ENCODE measurements at regions of chr3 and their contacts with region 1.

Region 1: DNA sequence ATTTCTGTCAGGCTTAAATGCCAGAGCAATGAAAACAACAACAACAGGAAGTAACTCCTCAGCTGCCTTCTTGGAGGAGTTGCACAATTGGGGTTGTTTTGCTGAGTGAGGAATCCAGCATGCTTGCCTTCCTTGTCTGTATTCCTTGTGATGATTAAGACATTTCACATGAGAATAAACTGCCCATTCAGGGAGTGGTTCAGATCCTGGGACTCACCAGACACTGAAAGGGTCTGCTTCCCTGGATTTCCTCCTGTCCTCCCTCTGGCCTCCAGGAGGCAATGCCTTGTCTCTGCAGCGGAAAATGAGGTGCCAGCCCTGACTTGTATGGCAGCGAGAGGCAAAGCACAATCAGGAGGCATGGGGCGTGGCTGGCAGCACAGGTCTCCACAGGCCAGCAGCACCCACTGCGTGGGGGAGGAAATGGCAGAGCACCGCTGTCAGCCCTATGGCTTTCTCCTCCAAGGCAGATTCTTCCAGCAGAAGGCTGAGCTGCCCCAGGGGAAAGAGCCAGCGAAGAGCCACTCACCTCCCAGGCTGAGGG is 41.5 kb downstream of the RBP2 start:
- DNase-seq: no peak
- H3K4me3 ChIP-seq: no peak overlapping the region
- H3K27ac ChIP-seq: no peak overlapping the region
- H3K4me1 ChIP-seq: peaks cover 0 to 5% (median 0%) of the 10 kb centered on the region in 3 donors
- H3K27me3 ChIP-seq: no peaks in the 10 kb centered on the region
- CTCF ChIP-seq: no peak

Region 2: DNA sequence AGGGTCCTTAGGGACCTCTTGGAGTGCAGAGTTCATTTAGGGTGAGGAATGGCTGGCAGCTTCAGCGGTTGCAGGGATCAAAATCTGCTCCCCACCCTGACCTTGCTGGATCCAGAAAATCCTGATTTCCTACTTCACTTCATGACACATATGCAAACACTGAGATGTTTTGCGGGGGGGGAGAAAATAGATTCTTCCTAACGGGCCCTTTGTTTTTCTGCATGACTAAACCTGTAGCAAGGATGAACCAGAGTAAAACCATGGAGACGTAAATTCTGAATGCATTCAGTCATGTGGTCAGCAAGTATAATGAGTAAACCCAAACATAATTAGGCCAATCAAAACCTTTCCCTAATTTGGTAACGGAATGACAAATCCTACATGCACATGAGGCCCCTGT is 124.7 kb after region 1 on chr3:
- intact Hi-C with region 1: loop called (anchors 10 kb)
- DNase-seq: peak in 2 of 5 donors; percentile 47 to 53
- H3K4me3 ChIP-seq: no peak overlapping the region
- H3K27ac ChIP-seq: no peak overlapping the region
- H3K4me1 ChIP-seq: no peaks in the 10 kb centered on the region
- H3K27me3 ChIP-seq: no peaks in the 10 kb centered on the region
- CTCF ChIP-seq: no peak

Measured in kidney (tissue), 22 donors.